Activated naive CD4-positive, alpha-beta T cell treated with anti-CD3 and anti-CD28 coated beads for 36 hours (primary cell): ENCODE measurements at regions of chr9 and their contacts with region 1.

Region 1: GRCh38 chr9:31272456-31273295 is 1111.8 kb upstream of the ACO1 start:
- DNase-seq: peak; percentile 71
- H3K4me3 Mint-ChIP-seq: no peak overlapping the region
- H3K27ac Mint-ChIP-seq: no peak overlapping the region
- H3K4me1 Mint-ChIP-seq: peaks cover 13% of the 10 kb centered on the region
- H3K27me3 Mint-ChIP-seq: no peaks in the 10 kb centered on the region

Region 2: DNA sequence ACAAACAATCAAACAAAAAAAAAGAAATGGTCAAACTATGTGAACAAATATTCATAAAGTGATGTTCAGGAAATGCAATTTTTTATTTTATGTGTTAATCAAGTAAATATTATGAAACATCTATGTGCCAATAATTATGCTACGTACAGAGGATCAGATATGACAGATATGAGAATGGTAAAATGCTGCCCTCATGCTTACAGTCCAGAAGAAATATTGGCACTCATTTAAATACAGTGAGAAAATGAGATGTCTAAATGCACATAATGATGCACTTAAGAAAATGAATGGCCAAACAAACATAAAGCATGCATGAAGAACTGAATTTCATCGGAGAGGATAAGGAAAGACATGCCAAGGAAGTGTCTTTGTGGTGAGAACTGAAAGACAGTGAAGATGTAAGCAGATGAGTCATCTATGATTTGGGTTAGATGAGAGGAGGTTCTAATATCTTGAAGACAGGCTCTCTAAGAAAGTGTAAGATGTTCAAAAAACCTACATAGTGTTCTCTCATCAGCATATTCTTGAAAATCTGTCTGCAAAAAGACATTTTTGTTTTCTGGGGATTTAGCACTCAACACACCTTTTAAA is 119.3 kb before region 1 on chr9:
- CTCF ChIA-PET with region 1: no interaction called
- intact Hi-C with region 1: loop called (anchors 1 kb)
- DNase-seq: no peak
- H3K4me3 Mint-ChIP-seq: no peak overlapping the region
- H3K27ac Mint-ChIP-seq: no peak overlapping the region
- H3K4me1 Mint-ChIP-seq: peaks cover 7% of the 10 kb centered on the region
- H3K27me3 Mint-ChIP-seq: no peaks in the 10 kb centered on the region

Region 3: GRCh38 chr9:31236344-31236743 is 36.3 kb before region 1 on chr9:
- CTCF ChIA-PET with region 1: no interaction called
- intact Hi-C with region 1: loop called (anchors 1 kb)
- DNase-seq: no peak
- H3K4me3 Mint-ChIP-seq: no peak overlapping the region
- H3K27ac Mint-ChIP-seq: no peak overlapping the region
- H3K4me1 Mint-ChIP-seq: peaks cover 18% of the 10 kb centered on the region
- H3K27me3 Mint-ChIP-seq: no peaks in the 10 kb centered on the region

Region 4: DNA sequence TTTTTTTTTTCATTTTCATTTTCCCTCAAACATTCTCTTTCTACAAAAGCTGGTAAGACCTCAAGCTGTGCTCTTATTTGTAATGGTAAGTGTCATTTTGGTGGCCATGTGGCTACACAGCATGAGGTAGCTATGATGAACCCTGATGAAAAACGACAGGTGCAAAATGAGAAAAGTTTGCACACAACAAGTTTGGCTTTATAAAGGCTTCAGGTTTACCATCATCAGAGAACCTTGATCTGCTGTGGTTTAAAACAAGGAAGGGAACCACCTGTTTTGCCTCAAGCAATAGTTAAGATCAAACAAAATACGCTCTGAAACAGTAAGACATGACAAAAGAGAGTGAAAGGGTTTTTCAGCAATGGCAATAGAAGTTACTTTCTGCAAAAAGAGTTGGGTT is 12.9 kb before region 1 on chr9:
- CTCF ChIA-PET with region 1: interaction called, 4 read pairs
- intact Hi-C with region 1: loop called (anchors 1 kb)
- DNase-seq: peak; percentile 25
- H3K4me3 Mint-ChIP-seq: peak overlapping the region; percentile 17
- H3K27ac Mint-ChIP-seq: peak overlapping the region; percentile 71
- H3K4me1 Mint-ChIP-seq: peaks cover 18% of the 10 kb centered on the region
- H3K27me3 Mint-ChIP-seq: no peaks in the 10 kb centered on the region

Region 5: GRCh38 chr9:31347082-31347617 is 74.5 kb after region 1 on chr9:
- CTCF ChIA-PET with region 1: no interaction called
- intact Hi-C with region 1: loop called (anchors 2 kb)
- DNase-seq: peak; percentile 10
- H3K4me3 Mint-ChIP-seq: peak overlapping the region; percentile 66
- H3K27ac Mint-ChIP-seq: peak overlapping the region; percentile 93
- H3K4me1 Mint-ChIP-seq: peaks cover 27% of the 10 kb centered on the region
- H3K27me3 Mint-ChIP-seq: no peaks in the 10 kb centered on the region